Aorta (tissue), 5 donors: ENCODE measurements at regions of chr1 and their contacts with region 1.

Region 1: GRCh38 chr1:2227346-2228153 is 569 bp upstream of the SKI start:
- DNase-seq: peak; percentile 98 to 99
- ATAC-seq: peak; percentile 95
- H3K4me3 ChIP-seq: peak overlapping the region; percentile 93
- H3K27ac ChIP-seq: peak overlapping the region; percentile 91 to 99
- H3K4me1 ChIP-seq: no peaks in the 10 kb centered on the region
- H3K27me3 ChIP-seq: no peaks in the 10 kb centered on the region

Region 2: DNA sequence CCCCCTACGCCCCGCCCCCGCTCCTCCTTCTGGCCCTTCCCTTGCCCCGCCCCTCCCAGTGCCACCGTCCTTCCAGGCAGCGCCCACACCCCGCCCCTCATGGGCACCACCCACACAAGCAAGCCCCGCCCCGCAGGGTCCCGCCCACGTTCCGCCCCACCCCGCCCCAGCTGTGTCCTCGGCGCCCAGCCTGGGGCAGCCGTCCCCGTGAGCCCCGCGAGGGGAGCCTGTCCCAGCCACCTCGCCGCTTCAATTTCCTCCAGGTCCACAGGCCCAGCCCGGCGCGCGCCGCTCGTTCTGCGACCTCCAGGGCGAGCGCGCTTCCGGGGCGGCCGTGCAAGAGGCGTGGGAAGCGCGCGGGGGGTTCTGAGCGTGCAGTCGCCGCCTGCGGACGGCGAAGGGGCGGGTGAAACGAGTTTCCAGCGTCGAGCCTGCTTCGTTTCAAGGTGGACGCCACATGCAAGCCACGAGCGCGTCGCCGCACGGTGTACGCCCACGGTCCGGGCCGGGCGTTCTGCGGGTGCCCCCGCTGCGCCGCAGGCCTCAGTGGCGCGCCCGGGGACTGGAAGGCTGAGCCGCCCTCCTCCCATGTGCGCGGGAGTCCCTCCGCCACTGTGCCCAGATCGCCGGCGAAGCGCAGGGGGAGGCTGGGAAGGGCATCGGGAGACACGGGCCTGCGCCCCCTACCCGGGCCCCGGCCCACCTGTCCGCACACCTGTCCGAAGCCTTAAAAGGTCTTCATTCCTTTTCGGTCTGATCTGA is 22.2 kb before region 1 on chr1:
- intact Hi-C with region 1: loop called in 1 of 2 experiments (anchors 2 kb)
- DNase-seq: peak; percentile 98 to 99
- ATAC-seq: peak; percentile 81
- H3K4me3 ChIP-seq: no peak overlapping the region
- H3K27ac ChIP-seq: peak overlapping the region; percentile 58 to 88
- H3K4me1 ChIP-seq: no peaks in the 10 kb centered on the region
- H3K27me3 ChIP-seq: no peaks in the 10 kb centered on the region

Region 3: GRCh38 chr1:2212542-2213491 is 14.7 kb before region 1 on chr1:
- intact Hi-C with region 1: loop called (anchors 1 to 2 kb)
- DNase-seq: peak; percentile 96 to 97
- ATAC-seq: peak; percentile 64
- H3K4me3 ChIP-seq: no peak overlapping the region
- H3K27ac ChIP-seq: peak overlapping the region; percentile 98 to 99
- H3K4me1 ChIP-seq: peaks cover 0 to 2% of the 10 kb centered on the region in 2 donors
- H3K27me3 ChIP-seq: no peaks in the 10 kb centered on the region

Region 4: DNA sequence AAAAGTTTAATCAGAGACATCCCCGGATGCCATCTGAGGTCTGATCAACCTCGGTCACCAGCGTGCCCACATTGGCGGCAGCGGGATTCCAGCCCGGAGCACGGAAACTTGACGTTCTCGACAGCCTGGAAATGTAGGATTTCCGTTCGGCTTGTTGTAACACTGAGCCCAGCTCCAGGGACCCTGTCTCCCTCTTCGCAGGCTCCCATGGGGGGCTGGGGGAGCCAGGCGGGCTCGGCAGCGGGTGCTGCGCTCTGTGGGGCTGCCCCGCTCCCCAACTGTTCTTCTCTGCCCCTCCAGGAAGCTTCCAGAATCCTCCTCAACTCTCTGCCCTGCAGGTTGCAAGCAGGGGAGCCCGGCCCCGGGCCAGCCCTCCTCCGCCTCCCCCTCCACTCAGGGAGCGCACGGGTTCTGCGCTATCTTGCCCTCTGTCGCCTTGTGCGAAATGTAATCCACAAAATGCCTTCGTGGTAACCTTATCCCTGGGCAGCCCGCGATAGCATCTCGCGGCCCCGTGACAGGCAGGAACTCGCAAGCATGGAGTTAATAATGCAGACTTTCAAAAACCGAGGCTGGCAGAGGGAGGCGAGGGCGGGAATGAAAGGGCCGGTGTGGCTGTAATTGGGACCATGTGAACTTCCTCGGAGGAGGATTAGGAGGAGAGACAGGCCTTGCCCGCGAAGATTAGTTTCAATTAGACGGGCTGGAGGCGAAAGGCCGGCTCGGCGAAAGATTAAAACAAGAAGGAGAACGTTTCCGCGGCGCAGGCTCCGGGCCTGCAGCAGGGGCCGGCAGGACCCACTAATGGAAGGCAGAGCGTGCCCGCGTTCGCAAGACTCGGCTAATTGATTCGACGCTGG is 627.9 kb after region 1 on chr1:
- intact Hi-C with region 1: no loop called
- DNase-seq: peak; percentile 29 to 60
- ATAC-seq: no peak
- H3K4me3 ChIP-seq: no peak overlapping the region
- H3K27ac ChIP-seq: no peak overlapping the region
- H3K4me1 ChIP-seq: no peaks in the 10 kb centered on the region
- H3K27me3 ChIP-seq: no peaks in the 10 kb centered on the region

Region 5: DNA sequence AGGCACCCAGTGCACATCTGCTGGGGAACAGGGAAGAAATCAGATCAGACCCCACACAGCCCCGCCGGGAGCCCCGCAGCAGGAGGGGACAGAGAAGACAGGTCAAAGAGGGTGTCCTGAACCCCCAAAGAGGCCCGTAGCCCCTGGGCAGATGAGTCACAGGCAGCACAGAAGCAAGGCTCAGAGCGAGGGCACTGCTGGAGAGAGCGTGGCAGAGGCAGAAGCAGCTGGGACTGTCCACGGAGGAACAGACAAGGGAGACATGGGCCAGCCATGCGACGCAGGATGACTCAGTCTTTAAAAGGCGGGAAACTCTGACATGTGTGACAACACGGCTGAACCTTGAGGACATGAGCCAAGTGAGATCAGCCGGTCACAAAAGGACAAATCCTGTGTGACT is 826.9 kb after region 1 on chr1:
- intact Hi-C with region 1: no loop called
- DNase-seq: peak in 1 of 2 donors; percentile 57
- ATAC-seq: no peak
- H3K4me3 ChIP-seq: no peak overlapping the region
- H3K27ac ChIP-seq: no peak overlapping the region
- H3K4me1 ChIP-seq: no peaks in the 10 kb centered on the region
- H3K27me3 ChIP-seq: no peaks in the 10 kb centered on the region